Activated CD4-positive, alpha-beta T cell treated with anti-CD3 and anti-CD28 coated beads, Interleukin-2, amount 10 ng/mL, durations not matched to agents 24 days and 14 days (primary cell): ENCODE measurements at regions of chr16 and their contacts with region 1.

Region 1: DNA sequence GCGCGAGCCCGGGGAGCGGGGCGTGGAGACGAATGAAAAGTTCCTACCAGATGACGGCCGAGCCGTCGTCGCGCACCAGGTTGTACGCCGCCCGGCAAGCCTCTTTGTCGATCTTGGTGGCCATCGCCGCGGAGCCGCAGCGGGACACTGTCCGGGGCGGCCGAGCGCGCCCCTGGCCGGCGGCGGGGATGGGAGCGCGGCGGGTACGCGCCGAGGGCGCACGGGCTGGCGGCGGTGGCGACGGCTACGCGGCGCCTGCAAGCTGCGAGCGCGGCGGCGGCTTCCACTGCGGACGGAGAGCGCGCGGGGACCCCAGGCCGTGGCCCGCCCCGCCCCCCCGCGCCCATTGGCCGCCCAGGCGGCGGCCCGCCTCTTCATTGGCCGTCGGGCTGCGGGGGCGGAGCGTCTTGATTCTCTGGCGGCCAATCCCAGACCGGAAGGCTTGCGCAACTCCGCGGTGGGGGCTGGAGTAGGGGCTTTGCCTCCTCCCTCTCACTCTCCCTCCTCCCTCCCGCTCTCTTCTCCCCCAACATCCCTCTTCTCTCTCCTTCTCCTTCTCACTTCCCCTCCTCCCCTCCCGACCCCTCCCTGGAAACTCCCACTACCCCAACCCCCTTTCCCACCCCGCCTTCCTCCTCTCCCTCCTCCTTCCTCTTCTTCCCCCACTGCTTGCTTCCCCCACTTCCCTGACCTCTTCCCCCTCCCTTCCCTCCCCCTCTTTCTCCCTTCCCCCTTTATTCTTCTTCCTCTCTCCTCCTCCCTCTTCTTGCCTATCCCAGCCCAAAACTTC is at the start of gene COTL1:
- DNase-seq: peak; percentile 98
- H3K4me3 Mint-ChIP-seq: peak within 1 kb of the TSS; percentile 96
- H3K27ac Mint-ChIP-seq: peak within 1 kb of the TSS; percentile 89
- H3K4me1 Mint-ChIP-seq: peaks cover 48% of the 10 kb centered on the region
- H3K27me3 Mint-ChIP-seq: peaks cover 7% of the 10 kb centered on the region
- total RNA-seq, gene COTL1: 470 and 474 TPM in 2 replicates

Region 2: DNA sequence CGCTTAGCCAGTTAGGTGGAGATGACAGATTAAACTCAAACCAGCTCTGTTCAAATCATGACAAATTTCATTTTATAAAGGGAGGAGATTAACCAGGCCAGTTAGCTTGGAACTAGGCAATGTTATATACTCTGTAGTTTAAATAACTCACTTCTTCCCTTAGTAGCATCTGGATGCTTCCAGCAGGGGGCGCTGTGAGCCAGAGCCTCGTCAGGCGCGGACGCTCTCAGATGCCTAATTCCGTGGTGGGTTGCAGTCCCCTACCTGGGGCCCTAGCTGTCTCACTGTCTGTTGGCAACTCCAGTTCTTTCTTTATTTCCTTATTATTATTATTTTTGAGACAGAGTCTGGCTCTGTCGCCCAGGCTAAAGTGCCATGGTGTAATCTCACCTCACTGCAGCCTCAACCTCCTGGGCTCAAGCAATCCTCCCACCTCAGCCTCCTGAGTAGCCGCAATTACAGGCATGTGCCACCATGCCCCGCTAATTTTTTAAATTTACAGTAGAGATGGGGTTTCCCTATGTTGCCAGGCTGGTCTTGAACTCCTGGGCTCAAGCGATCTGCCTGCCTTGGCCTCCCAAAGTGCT is 340.7 kb before region 1 on chr16:
- intact Hi-C with region 1: loop called (anchors 1 kb)
- DNase-seq: peak; percentile 92
- H3K4me3 Mint-ChIP-seq: no peak overlapping the region
- H3K27ac Mint-ChIP-seq: no peak overlapping the region
- H3K4me1 Mint-ChIP-seq: no peaks in the 10 kb centered on the region
- H3K27me3 Mint-ChIP-seq: peaks cover 4% of the 10 kb centered on the region

Region 3: DNA sequence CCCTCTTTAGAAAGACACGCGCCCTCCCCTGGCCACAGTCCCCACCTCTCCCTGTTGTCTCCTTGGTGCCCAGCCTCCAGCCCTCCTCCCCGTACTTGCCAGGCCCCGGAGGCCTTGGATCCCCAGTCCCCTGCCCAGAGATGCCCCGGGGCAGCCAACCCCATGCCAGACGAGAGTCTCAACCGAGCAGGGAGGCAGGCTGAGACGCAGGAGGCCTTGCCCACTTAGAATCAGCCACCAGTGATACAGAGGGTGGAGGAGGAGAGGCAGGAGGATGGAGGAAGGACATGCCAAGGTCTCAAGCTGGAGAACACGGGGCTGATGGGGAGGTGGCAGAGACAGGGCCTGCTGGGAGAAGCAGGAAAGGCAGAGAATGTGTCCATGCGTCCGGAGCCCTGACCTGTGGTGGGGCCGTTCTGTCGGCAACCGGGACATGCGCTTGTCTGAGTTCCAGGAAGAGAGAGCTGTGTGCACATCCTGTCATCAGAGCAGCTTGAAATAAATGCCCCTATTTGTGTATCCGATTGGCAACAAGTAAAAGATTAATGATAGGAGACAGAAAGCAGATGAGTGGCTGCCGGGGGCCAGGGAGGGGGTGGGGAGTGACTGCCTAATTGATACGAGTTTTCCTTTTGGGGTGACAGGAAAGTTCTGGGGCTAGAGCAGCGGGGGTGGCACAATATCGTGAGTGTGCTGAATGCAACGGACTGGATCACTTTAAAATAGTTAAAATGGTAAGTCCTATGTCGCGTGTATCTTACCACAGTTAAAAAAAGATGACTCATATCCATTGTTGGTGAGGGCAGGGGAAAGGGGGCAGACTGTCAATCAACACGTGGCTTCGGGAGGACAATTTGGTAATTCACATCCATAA is 68.8 kb before region 1 on chr16:
- intact Hi-C with region 1: loop called (anchors 1 kb)
- DNase-seq: peak; percentile 87
- H3K4me3 Mint-ChIP-seq: peak overlapping the region; percentile 95
- H3K27ac Mint-ChIP-seq: peak overlapping the region; percentile 99
- H3K4me1 Mint-ChIP-seq: peaks cover 63% of the 10 kb centered on the region
- H3K27me3 Mint-ChIP-seq: no peaks in the 10 kb centered on the region

Region 4: GRCh38 chr16:84599521-84600202 is 18.3 kb before region 1 on chr16:
- intact Hi-C with region 1: loop called (anchors 1 kb)
- DNase-seq: peak; percentile 87
- H3K4me3 Mint-ChIP-seq: peak overlapping the region; percentile 87
- H3K27ac Mint-ChIP-seq: peak overlapping the region; percentile 99
- H3K4me1 Mint-ChIP-seq: peaks cover 79% of the 10 kb centered on the region
- H3K27me3 Mint-ChIP-seq: no peaks in the 10 kb centered on the region

Region 5: GRCh38 chr16:84726079-84726668 is 108.2 kb after region 1 on chr16:
- intact Hi-C with region 1: loop called (anchors 2 kb)
- DNase-seq: peak; percentile 94
- H3K4me3 Mint-ChIP-seq: peak overlapping the region; percentile 58
- H3K27ac Mint-ChIP-seq: peak overlapping the region; percentile 41
- H3K4me1 Mint-ChIP-seq: peaks cover 62% of the 10 kb centered on the region
- H3K27me3 Mint-ChIP-seq: no peaks in the 10 kb centered on the region